Activated T-helper 1 cell treated with anti-CD3 and anti-CD28 coated beads, Interleukin-12 subunit alpha, Interleukin-12 subunit beta, Interleukin-2, Interleukin-4 antibody, amounts not matched to agents 30 ng/mL and 10 ng/mL and 1 ng/mL, durations not matched to agents 14 hours and 24 hours and 36 hours (primary cell): ENCODE measurements at regions of chr9 and their contacts with region 1.

Region 1: DNA sequence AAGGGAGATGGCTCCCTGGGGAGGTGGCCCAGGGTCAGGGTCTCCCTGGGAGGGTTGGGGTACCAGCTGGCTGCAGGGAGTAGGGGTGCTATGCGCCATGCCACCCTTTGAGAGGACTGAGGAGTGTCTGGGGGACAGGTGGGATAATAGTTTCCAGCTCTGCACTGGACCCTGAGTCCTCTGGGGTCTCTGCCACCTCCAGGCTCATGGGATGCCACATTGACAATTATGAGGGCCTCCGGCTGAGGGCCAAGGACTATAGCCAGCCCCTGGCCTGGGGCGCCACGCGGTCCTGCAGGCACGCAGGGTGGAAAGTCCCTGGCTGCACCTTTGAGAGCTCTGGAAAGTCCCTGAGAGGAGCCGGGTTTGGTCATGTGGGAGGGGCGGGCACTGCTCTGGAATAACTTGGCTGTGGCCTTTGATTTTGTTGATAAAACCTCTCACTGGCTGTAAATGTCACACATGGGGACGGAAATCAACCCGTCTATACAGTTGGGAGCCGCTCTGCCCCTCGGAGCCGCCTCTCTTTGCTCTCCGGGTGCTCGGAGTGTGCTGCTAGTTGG is 16.0 kb downstream of the TRAF2 start:
- DNase-seq: peak; percentile 88
- H3K4me3 Mint-ChIP-seq: peak overlapping the region; percentile 80
- H3K27ac Mint-ChIP-seq: peak overlapping the region; percentile 99
- H3K4me1 Mint-ChIP-seq: peaks cover 63% of the 10 kb centered on the region
- H3K27me3 Mint-ChIP-seq: no peaks in the 10 kb centered on the region

Region 2: GRCh38 chr9:136829981-136830885 is 72.1 kb before region 1 on chr9:
- intact Hi-C with region 1: no loop called
- DNase-seq: no peak
- H3K4me3 Mint-ChIP-seq: no peak overlapping the region
- H3K27ac Mint-ChIP-seq: no peak overlapping the region
- H3K4me1 Mint-ChIP-seq: no peaks in the 10 kb centered on the region
- H3K27me3 Mint-ChIP-seq: no peaks in the 10 kb centered on the region

Region 3: GRCh38 chr9:136885950-136886578 is 16.3 kb before region 1 on chr9 and contains the start of gene TRAF2:
- intact Hi-C with region 1: loop called (anchors 1 kb)
- DNase-seq: peak; percentile 99
- H3K4me3 Mint-ChIP-seq: peak within 1 kb of the TSS; percentile 98
- H3K27ac Mint-ChIP-seq: peak within 1 kb of the TSS; percentile 93
- H3K4me1 Mint-ChIP-seq: peaks cover 44% of the 10 kb centered on the region
- H3K27me3 Mint-ChIP-seq: no peaks in the 10 kb centered on the region
- total RNA-seq, gene TRAF2: 67.4 and 76.3 TPM in 2 replicates

Region 4: GRCh38 chr9:137000177-137000883 is 98.0 kb after region 1 on chr9:
- intact Hi-C with region 1: loop called (anchors 1 kb)
- DNase-seq: peak; percentile 22
- H3K4me3 Mint-ChIP-seq: peak overlapping the region; percentile 32
- H3K27ac Mint-ChIP-seq: peak overlapping the region; percentile 72
- H3K4me1 Mint-ChIP-seq: peaks cover 26% of the 10 kb centered on the region
- H3K27me3 Mint-ChIP-seq: peaks cover 13% of the 10 kb centered on the region